Natural killer cell (primary cell): ENCODE measurements at regions of chr20 and their contacts with region 1.

Region 1: DNA sequence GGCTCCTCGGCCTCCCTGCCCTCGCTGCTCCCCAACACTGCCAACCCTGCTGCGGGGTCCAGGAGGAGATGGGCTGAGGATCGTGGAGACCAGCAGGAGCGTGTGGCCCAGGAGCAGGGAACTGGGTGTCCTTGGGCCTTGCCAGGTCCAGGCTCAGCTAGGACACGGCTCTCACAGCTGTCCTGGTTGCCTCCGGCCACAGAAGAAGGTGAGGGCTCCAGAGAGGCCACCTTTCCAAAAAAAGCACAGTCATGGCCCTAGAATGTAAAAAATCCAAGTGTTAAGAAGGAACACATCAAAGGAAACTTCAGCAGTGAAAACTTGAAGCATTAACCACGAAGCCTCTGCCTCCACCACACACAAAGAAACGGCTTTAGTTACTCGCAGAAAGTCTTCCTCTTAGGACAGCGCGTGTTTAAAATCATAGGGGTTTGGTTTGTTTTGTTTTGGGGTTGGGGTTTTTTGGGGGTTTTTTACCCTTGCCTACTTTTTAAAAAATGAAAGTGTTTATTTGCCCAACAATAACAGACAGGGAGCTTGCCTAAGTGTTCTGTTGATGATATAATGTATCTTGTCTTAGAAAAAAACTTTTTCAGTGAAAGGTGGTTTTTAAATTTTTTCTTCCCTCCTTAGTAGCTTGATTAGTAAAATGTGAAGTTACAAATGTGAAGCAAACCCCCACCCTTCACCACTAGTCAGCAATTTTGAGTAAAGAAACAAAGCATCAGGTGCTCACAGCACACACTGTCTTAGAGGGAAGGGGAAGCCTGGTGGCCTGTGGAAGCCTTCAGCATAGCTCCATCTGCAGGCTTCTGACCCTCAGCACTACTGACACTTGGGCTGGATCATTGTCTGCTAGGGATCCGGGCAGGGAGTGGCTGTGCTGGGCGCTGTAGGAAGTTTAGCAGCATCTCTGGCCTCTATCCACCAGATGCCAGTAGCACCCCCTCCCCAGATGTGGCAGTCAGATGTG is 60.0 kb downstream of the PTPN1 start:
- DNase-seq: peak in 1 of 2 donors; percentile 73
- ATAC-seq: peak; percentile 59 to 72 (median 66)
- H3K4me3 ChIP-seq: no peak overlapping the region
- H3K4me3 Mint-ChIP-seq: no peak overlapping the region
- H3K27ac ChIP-seq: no peak overlapping the region
- H3K27ac Mint-ChIP-seq: peak overlapping the region; percentile 71 to 75
- H3K4me1 ChIP-seq: peaks cover 6% of the 10 kb centered on the region
- H3K4me1 Mint-ChIP-seq: peaks cover 42 to 67% of the 10 kb centered on the region in 2 donors
- H3K27me3 ChIP-seq: no peaks in the 10 kb centered on the region
- H3K27me3 Mint-ChIP-seq: no peaks in the 10 kb centered on the region
- CTCF ChIP-seq: no peak

Region 2: DNA sequence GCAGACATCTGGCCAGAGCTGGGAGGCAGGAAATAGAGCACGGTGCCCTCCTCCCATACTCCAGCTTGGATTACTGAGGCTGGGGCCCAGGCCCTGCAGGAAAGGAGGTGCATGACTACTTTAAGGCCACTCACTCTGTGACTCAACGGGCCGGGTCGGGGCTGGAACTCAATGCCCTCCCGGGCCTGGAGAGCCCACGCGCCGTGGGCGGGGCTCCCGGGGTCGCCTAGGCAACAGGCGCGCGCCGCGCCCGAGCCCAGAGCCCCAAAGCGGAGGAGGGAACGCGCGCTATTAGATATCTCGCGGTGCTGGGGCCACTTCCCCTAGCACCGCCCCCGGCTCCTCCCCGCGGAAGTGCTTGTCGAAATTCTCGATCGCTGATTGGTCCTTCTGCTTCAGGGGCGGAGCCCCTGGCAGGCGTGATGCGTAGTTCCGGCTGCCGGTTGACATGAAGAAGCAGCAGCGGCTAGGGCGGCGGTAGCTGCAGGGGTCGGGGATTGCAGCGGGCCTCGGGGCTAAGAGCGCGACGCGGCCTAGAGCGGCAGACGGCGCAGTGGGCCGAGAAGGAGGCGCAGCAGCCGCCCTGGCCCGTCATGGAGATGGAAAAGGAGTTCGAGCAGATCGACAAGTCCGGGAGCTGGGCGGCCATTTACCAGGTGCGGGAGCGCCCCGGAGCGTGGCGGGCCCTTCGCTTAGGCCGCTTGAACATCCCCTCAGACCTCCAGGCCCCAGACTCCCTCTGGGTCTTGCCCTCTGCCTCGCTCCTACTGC is 60.0 kb before region 1 on chr20 and contains the start of gene PTPN1:
- intact Hi-C with region 1: loop called (anchors 5 kb)
- DNase-seq: peak; percentile 99
- ATAC-seq: peak; percentile 96 to 99 (median 96)
- H3K4me3 ChIP-seq: peak within 1 kb of the TSS; percentile 99
- H3K4me3 Mint-ChIP-seq: peak within 1 kb of the TSS; percentile 93
- H3K27ac ChIP-seq: peak within 1 kb of the TSS; percentile 89
- H3K27ac Mint-ChIP-seq: peak within 1 kb of the TSS; percentile 95 to 98
- H3K4me1 ChIP-seq: peaks cover 24% of the 10 kb centered on the region
- H3K4me1 Mint-ChIP-seq: peaks cover 44 to 48% of the 10 kb centered on the region in 2 donors
- H3K27me3 ChIP-seq: no peaks in the 10 kb centered on the region
- H3K27me3 Mint-ChIP-seq: no peaks in the 10 kb centered on the region
- CTCF ChIP-seq: no peak
- total RNA-seq, gene PTPN1: 52.9 to 64.5 (median 58.3) TPM

Region 3: DNA sequence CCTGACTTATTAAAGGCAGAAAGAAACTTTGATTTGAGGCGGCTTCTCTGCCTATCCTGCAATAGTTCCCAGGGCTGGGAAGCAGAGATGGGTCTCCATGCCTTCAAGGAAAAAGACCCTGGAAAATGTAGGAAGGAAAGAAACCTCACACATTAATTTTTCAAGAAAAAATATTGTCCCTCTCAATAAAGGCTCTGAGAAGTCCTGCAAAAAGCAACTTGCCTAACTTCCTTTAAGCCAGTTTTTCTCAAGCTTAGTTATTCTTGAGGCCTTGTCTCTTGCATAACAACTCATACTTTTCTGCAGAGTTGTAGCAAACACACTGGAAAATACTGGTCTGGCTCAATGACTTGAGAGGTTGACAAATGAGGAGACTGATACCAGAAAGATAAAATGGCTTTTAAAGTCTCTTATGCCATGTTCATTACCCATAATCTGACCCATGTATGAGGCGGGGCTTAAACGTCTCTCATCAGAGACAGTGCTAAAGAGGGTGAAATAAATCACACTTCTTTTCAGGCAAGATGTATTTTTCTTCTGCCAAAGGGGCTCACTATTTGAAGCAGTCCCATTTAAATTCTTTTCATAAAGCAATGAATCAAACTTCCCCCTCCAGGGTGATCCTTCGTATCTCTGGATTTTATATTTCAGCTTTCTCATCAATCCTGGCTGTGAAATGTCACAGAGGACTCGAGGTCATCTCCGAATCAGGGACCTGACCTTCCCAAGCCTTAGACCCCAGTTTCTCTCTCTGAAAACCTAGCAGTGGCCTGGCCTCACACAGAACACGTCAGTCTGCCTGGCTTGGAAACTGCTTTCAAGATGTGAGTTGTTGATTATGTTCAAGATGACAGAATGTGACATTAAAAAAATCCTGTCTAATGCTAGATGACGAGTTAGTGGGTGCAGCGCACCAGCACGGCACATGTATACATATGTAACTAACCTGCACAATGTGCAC is 535.1 kb after region 1 on chr20:
- intact Hi-C with region 1: no loop called
- DNase-seq: no peak
- ATAC-seq: no peak
- H3K4me3 ChIP-seq: no peak overlapping the region
- H3K4me3 Mint-ChIP-seq: no peak overlapping the region
- H3K27ac ChIP-seq: no peak overlapping the region
- H3K27ac Mint-ChIP-seq: no peak overlapping the region
- H3K4me1 ChIP-seq: peaks cover 3% of the 10 kb centered on the region
- H3K4me1 Mint-ChIP-seq: no peaks in the 10 kb centered on the region
- H3K27me3 ChIP-seq: no peaks in the 10 kb centered on the region
- H3K27me3 Mint-ChIP-seq: peaks cover 8 to 20% of the 10 kb centered on the region in 2 donors
- CTCF ChIP-seq: no peak